SK-MEL-5 (cell line): ENCODE measurements at regions of chr2 and their contacts with region 1.

Region 1: DNA sequence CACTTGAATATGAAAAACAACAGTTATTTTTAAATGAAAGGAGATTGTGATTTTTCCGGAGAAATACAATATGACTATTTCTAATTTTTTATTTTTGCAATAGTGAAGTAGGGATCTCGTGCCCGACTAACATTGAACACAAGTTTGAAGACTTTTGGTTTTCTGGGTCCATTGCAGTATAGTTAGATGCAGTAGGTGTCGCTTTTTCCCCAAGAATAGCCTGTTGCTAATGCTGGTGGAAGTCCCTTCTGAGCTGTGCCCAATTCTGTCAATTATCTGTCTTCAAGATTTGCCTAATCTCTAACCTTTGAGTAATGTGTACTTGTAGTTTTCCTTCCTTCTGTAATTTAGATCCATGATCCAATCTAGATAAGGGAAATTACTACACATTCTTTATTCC is 36.5 kb downstream of the SEMA4F start:
- DNase-seq: peak; percentile 83

Region 2: DNA sequence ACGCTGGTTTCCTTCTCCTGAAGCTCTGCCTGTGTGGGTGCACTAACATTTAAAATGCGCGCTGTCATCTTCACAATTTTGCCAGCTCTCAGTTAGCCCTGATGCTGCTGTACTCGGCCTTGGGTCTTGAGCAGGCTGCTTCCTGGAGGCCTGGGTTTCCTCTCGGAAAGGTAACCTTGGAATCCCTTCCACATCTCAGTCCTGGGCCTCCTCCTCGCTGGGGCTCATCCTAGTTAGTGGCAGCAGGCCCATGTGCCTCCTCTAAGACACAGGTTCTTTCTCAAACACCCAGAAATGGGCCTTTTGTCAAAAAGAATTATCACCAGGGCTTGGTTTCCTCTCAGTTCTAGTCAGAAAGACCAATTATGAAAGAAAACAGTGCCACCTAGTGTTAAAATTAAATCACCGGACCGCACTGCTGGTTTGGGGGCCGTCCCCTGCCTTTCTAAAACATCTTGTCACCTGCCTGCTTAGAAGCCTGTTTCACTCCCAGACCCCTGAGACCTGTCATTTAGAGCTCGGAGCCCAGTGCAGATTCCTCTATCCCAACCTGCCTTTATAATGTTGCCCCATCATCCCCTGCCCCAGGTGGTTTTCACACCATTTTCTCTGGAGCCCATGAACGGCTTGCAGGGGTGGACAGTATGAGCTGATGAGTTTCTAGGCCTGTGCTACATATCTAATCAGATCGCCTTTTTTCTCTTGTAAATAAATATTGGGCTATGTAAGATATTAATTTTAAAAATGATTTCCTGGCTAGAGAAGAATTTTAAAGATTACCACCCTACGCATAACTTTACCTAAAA is 185.7 kb after region 1 on chr2:
- in situ Hi-C with region 1: loop called (anchors 25 kb)
- DNase-seq: peak; percentile 80

Region 3: DNA sequence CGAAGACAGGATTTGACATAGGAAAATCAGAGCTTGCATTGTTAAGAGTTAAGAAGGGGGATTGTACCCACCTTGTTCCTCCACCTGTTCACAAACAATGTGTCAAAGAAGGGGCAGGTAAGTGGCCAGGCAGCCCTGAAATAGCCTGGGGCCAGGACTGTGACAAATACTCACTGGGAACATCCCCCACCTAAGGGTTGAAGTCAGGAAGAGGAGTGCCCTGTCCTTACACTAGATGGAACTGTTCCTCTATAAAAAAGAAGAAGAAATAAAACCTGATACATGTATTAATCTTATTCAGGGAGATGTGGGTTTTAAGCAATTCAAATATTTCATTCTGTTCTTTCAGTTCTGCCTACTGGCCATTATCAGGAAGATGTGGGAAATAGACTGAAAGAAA is 466.9 kb after region 1 on chr2:
- in situ Hi-C with region 1: no loop called
- DNase-seq: peak; percentile 30